Posterior cingulate gyrus (tissue), 11 donors: ENCODE measurements at regions of chr6 and their contacts with region 1.

Region 1: GRCh38 chr6:144582939-144583613 is 297.9 kb downstream of the UTRN start:
- DNase-seq: peak in 9 of 10 donors; percentile 17 to 87 (median 27)

Region 2: GRCh38 chr6:144931172-144932035 is 348.3 kb after region 1 on chr6:
- intact Hi-C with region 1: loop called (anchors 5 kb)
- DNase-seq: peak in 4 of 10 donors; percentile 13 to 24 (median 18)

Region 3: DNA sequence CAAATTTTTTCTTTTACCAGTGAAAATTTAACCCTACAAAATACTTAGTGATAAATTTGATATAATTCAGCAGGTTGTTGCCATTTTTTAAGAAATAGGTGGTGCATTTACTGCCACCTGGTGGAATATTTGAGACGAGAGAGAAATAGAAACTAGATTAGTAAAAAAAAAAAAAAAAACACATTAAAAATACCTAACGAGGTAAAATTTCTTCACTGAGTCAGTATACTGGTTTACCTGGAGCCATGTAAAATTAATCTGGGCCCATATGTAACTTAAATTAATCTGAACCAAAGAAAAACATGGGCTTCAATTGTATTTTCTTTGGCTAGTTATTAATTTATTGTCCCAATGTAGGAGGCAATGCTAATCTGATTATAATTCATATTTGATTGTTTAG is 631.5 kb after region 1 on chr6:
- intact Hi-C with region 1: loop called (anchors 10 kb)
- DNase-seq: no peak

Region 4: GRCh38 chr6:145633981-145634627 is 1051.0 kb after region 1 on chr6:
- intact Hi-C with region 1: loop called (anchors 2 kb)
- DNase-seq: peak; percentile 73 to 97 (median 93)

Region 5: DNA sequence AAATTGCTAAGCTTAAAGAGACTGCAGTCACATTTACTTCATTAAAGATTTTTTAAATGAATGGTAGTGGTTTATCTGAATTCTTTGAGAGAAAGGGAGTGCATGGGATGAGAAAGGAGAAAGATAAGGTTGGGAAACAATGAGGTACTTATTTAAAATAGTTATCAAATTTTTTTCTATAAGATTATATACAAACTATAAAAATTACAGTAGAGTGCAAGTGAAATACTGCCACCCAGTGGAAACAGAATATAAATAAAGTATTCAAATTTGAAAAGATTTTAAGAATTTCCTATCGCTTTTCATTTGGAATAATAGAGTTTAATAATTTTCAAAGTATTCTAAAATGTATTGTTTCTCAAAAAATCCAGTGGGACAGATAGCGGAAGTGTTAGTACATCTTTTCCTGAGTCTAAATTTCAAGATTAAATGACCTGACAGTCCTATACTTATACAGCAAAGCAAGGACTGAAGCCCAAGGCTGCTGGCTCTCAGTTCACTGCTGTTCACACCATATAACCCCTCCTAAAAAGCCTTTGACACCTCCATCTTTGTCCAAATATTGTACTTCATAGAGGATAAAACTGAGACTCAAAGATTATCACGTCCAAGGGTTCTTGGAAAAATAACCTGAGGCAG is 1121.2 kb after region 1 on chr6:
- intact Hi-C with region 1: loop called (anchors 10 kb)
- DNase-seq: no peak